GM12878 (cell line): ENCODE measurements at regions of chr20 and their contacts with region 1.

Region 1: GRCh38 chr20:33606118-33606771 is 55.9 kb upstream of the C20orf144 start:
- DNase-seq: peak; percentile 51
- ATAC-seq: peak; percentile 88
- H3K4me3 ChIP-seq: peak overlapping the region; percentile 6; the same call in 1 of the 2 replicates
- H3K27ac ChIP-seq: peak overlapping the region; percentile 16
- H3K4me1 ChIP-seq: peaks cover 45% of the 10 kb centered on the region
- H3K27me3 ChIP-seq: no peaks in the 10 kb centered on the region
- CTCF ChIP-seq: no peak
- EP300 ChIP-seq: no peak
- POLR2A ChIP-seq: no peak
- RAD21 ChIP-seq: no peak

Region 2: GRCh38 chr20:33554914-33555420 is 51.3 kb before region 1 on chr20:
- CTCF ChIA-PET with region 1: no interaction called
- POLR2A ChIA-PET with region 1: interaction called, 3 read pairs
- RAD21 ChIA-PET with region 1: interaction called, 15 read pairs
- SMC1A ChIA-PET with region 1: interaction called, 10 read pairs
- in situ Hi-C with region 1: no loop called
- intact Hi-C with region 1: no loop called
- DNase-seq: peak; percentile 94
- ATAC-seq: peak; percentile 100
- H3K4me3 ChIP-seq: no peak overlapping the region
- H3K27ac ChIP-seq: peak overlapping the region; percentile 82
- H3K4me1 ChIP-seq: peaks cover 15% of the 10 kb centered on the region
- H3K27me3 ChIP-seq: no peaks in the 10 kb centered on the region
- CTCF ChIP-seq: no peak
- EP300 ChIP-seq: peak in 1 of 2 experiments; percentile 43; a peak in 2 of 4 replicates
- POLR2A ChIP-seq: peak; percentile 55; the same call in 1 of the 2 replicates
- RAD21 ChIP-seq: no peak

Region 3: DNA sequence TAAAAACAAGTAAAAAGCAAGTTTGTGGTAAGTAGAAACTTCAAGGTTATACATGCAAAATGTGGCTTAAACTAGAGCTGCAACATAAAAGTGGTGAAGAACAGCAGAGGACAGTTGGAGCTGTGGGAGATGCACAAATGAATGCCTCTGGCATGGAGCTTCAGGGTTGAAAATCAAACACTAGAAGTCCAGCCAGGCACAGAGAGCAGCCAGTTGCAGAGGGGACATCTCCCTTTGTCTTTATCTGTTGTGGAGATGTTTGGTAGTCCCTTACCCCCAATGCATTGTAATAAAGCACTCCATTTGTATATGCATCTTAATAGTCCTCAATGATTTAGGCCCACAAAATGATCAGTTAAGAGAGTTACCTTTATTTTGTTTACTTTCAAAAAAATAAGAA is 17.2 kb before region 1 on chr20:
- CTCF ChIA-PET with region 1: interaction called, 6 read pairs
- POLR2A ChIA-PET with region 1: interaction called, 6 read pairs
- RAD21 ChIA-PET with region 1: interaction called, 12 read pairs
- SMC1A ChIA-PET with region 1: interaction called, 19 read pairs
- in situ Hi-C with region 1: no loop called
- intact Hi-C with region 1: no loop called
- DNase-seq: no peak
- ATAC-seq: no peak
- H3K4me3 ChIP-seq: no peak overlapping the region
- H3K27ac ChIP-seq: no peak overlapping the region
- H3K4me1 ChIP-seq: 0 out of 2 replicates have a peak, but pooled peaks cover 3% of the 10 kb centered on the region
- H3K27me3 ChIP-seq: no peaks in the 10 kb centered on the region
- CTCF ChIP-seq: no peak
- EP300 ChIP-seq: no peak
- POLR2A ChIP-seq: no peak
- RAD21 ChIP-seq: no peak